Caco-2 (cell line): ENCODE measurements at regions of chr3 and their contacts with region 1.

Region 1: GRCh38 chr3:149273096-149273751 is 51.6 kb upstream of the CP start:
- DNase-seq: peak; percentile 57 to 70
- H3K4me3 ChIP-seq: no peak overlapping the region
- H3K4me3 Mint-ChIP-seq: no peak overlapping the region
- H3K27ac Mint-ChIP-seq: no peak overlapping the region
- H3K4me1 ChIP-seq: peaks cover 12% of the 10 kb centered on the region
- H3K4me1 Mint-ChIP-seq: peaks cover 21% of the 10 kb centered on the region
- H3K27me3 ChIP-seq: no peaks in the 10 kb centered on the region
- H3K27me3 Mint-ChIP-seq: no peaks in the 10 kb centered on the region
- CTCF ChIP-seq: peak; percentile 90 to 95

Region 2: DNA sequence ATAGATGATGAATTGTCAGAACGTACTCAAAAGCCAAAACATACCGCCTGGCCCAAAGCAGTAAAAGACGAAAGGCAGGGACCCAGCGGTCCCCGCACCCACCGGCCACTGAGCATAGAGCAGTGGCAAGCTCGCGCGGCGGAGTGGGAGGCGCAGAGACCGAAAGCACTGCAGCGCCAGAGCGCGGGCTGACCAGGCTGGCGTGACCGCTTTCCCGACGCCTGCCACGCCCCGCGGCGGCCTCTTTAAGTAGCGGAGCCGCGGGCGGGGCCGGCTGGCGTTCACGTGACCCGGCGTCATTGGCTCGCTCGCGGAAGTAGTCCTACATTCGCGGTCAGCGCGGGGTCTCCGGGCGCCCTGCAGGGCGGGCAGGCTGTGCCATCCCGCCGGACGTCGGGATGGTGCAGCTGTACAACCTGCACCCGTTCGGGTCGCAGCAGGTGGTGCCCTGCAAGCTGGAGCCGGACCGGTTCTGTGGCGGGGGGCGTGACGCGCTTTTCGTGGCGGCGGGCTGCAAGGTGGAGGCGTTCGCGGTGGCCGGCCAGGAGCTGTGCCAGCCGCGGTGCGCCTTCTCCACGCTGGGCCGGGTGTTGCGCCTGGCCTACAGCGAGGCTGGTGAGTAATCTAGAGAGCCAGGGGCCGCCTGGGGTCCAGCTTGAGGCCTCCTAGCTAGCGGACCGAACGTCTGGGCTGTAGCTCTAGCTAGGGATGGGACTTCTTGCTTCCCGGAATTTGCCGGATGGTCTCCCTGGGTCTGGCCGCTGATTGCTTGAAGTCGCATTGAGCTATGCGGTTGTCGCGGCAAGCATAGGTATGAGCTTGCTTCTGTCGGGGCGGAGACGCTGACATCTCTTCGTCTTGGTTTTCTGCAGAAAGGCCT is 143.7 kb before region 1 on chr3 and contains the start of gene HPS3:
- CTCF ChIA-PET with region 1: no interaction called
- POLR2A ChIA-PET with region 1: no interaction called
- intact Hi-C with region 1: loop called (anchors 2 kb)
- DNase-seq: peak; percentile 86 to 91
- H3K4me3 ChIP-seq: peak within 1 kb of the TSS; percentile 84
- H3K4me3 Mint-ChIP-seq: peak within 1 kb of the TSS; percentile 97
- H3K27ac Mint-ChIP-seq: peak within 1 kb of the TSS; percentile 92
- H3K4me1 ChIP-seq: no peaks in the 10 kb centered on the region; the same call in none of the 2 replicates
- H3K4me1 Mint-ChIP-seq: peaks cover 11% of the 10 kb centered on the region
- H3K27me3 ChIP-seq: no peaks in the 10 kb centered on the region
- H3K27me3 Mint-ChIP-seq: no peaks in the 10 kb centered on the region
- CTCF ChIP-seq: no peak
- total RNA-seq, gene HPS3: 19.4 and 20.9 TPM in 2 replicates

Region 3: GRCh38 chr3:149163066-149163465 is 110.2 kb before region 1 on chr3:
- CTCF ChIA-PET with region 1: no interaction called
- POLR2A ChIA-PET with region 1: no interaction called
- intact Hi-C with region 1: no loop called
- DNase-seq: no peak
- H3K4me3 ChIP-seq: no peak overlapping the region
- H3K4me3 Mint-ChIP-seq: no peak overlapping the region
- H3K27ac Mint-ChIP-seq: no peak overlapping the region
- H3K4me1 ChIP-seq: no peaks in the 10 kb centered on the region
- H3K4me1 Mint-ChIP-seq: no peaks in the 10 kb centered on the region
- H3K27me3 ChIP-seq: no peaks in the 10 kb centered on the region
- H3K27me3 Mint-ChIP-seq: no peaks in the 10 kb centered on the region
- CTCF ChIP-seq: no peak

Region 4: GRCh38 chr3:149215515-149215914 is 57.7 kb before region 1 on chr3:
- CTCF ChIA-PET with region 1: no interaction called
- POLR2A ChIA-PET with region 1: no interaction called
- intact Hi-C with region 1: loop called (anchors 2 kb)
- DNase-seq: no peak
- H3K4me3 ChIP-seq: no peak overlapping the region
- H3K4me3 Mint-ChIP-seq: no peak overlapping the region
- H3K27ac Mint-ChIP-seq: no peak overlapping the region
- H3K4me1 ChIP-seq: peaks cover 60% of the 10 kb centered on the region
- H3K4me1 Mint-ChIP-seq: peaks cover 31% of the 10 kb centered on the region
- H3K27me3 ChIP-seq: no peaks in the 10 kb centered on the region
- H3K27me3 Mint-ChIP-seq: no peaks in the 10 kb centered on the region
- CTCF ChIP-seq: no peak

Region 5: DNA sequence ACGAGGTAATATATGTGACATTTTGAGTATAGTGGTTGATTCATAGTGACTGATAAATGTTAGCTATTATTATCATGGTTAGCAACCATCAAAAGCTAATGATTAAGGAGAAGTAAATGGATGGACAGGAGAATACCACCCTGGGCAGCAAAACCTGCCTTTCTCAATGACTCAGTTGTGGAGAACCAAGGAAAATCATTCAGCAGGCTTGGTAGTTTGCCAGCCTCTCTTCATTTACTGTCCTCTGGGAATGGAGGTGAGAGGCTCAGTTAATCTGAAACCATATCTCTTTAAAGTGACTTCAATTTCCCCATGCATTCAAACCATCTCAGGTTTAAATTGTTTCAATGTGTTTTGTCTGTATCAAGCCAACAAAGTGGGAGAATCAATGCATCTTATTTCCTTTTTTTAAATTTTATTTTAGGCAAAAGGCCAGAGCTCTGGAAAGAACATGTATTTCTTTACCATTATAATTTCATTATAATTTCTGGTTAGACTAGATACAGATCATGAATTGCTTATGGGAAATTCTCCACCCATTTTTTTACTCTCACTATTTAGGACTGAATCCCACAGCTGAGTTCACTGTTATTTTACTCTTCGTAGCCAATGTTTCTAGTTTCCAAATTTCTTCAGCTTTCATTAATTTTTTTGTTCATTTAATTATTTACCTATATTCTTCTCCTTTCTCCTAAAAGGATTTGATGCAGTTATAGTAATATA is 57.5 kb after region 1 on chr3:
- CTCF ChIA-PET with region 1: no interaction called
- POLR2A ChIA-PET with region 1: no interaction called
- intact Hi-C with region 1: loop called (anchors 1 kb)
- DNase-seq: no peak
- H3K4me3 ChIP-seq: no peak overlapping the region
- H3K4me3 Mint-ChIP-seq: no peak overlapping the region
- H3K27ac Mint-ChIP-seq: no peak overlapping the region
- H3K4me1 ChIP-seq: no peaks in the 10 kb centered on the region
- H3K4me1 Mint-ChIP-seq: no peaks in the 10 kb centered on the region
- H3K27me3 ChIP-seq: no peaks in the 10 kb centered on the region
- H3K27me3 Mint-ChIP-seq: no peaks in the 10 kb centered on the region
- CTCF ChIP-seq: no peak